ENCODE measurements at regions of chr17 and their contacts with region 1.

Region 1: GRCh38 chr17:34974794-34975785 is 5.2 kb upstream of the LIG3 start:
- DNase-seq: no peak

Region 2: GRCh38 chr17:34961093-34961911 is 13.8 kb before region 1 on chr17 and contains the starts of genes CCT6B and ZNF830:
- CTCF ChIA-PET with region 1: no interaction called
- POLR2A ChIA-PET with region 1: interaction called, 11 read pairs
- DNase-seq: peak; percentile 88

Measured in HEK293T (cell line).